PC-9 (cell line): ENCODE measurements at regions of chrX and their contacts with region 1.

Region 1: GRCh38 chrX:153971450-153972367 is at the start of gene HCFC1:
- DNase-seq: peak; percentile 75 to 90
- H3K4me3 ChIP-seq: peak within 1 kb of the TSS; percentile 92
- H3K27ac ChIP-seq: peak within 1 kb of the TSS; percentile 99
- H3K4me1 ChIP-seq: peaks cover 13% of the 10 kb centered on the region
- H3K27me3 ChIP-seq: no peaks in the 10 kb centered on the region
- CTCF ChIP-seq: no peak
- total RNA-seq, gene HCFC1: 67.1 and 79.9 TPM in 2 replicates

Region 2: GRCh38 chrX:154002215-154002719 is 30.6 kb after region 1 on chrX:
- CTCF ChIA-PET with region 1: no interaction called
- POLR2A ChIA-PET with region 1: no interaction called
- intact Hi-C with region 1: loop called (anchors 2 kb)
- DNase-seq: peak; percentile 45 to 76
- H3K4me3 ChIP-seq: no peak overlapping the region
- H3K27ac ChIP-seq: peak overlapping the region; percentile 58
- H3K4me1 ChIP-seq: peaks cover 15% of the 10 kb centered on the region
- H3K27me3 ChIP-seq: no peaks in the 10 kb centered on the region
- CTCF ChIP-seq: no peak

Region 3: GRCh38 chrX:154547245-154548027 is 575.7 kb after region 1 on chrX and contains the start of gene IKBKG:
- CTCF ChIA-PET with region 1: no interaction called
- POLR2A ChIA-PET with region 1: interaction called, 6 read pairs
- intact Hi-C with region 1: loop called (anchors 1 kb)
- DNase-seq: peak; percentile 82 to 98
- H3K4me3 ChIP-seq: peak within 1 kb of the TSS; percentile 99
- H3K27ac ChIP-seq: peak within 1 kb of the TSS; percentile 100
- H3K4me1 ChIP-seq: peaks cover 27% of the 10 kb centered on the region
- H3K27me3 ChIP-seq: no peaks in the 10 kb centered on the region
- CTCF ChIP-seq: no peak
- total RNA-seq, gene IKBKG: 68.3 and 69.4 TPM in 2 replicates